ENCODE measurements at regions of chr6 and their contacts with region 1.

Region 1: GRCh38 chr6:20302702-20303251 is 90.5 kb upstream of the MBOAT1 start:
- DNase-seq: no peak
- ATAC-seq: no peak
- H3K4me3 ChIP-seq: no peak overlapping the region
- H3K4me3 Mint-ChIP-seq: no peak overlapping the region
- H3K27ac ChIP-seq: no peak overlapping the region
- H3K27ac Mint-ChIP-seq: no peak overlapping the region
- H3K4me1 ChIP-seq: no peaks in the 10 kb centered on the region
- H3K4me1 Mint-ChIP-seq: no peaks in the 10 kb centered on the region
- H3K27me3 ChIP-seq: no peaks in the 10 kb centered on the region
- H3K27me3 Mint-ChIP-seq: peaks cover 0 to 17% (median 0%) of the 10 kb centered on the region in 5 donors

Region 2: GRCh38 chr6:20279608-20280287 is 23.0 kb before region 1 on chr6:
- CTCF ChIA-PET with region 1: no interaction called
- POLR2A ChIA-PET with region 1: no interaction called
- intact Hi-C with region 1: loop called in 1 of 2 experiments (anchors 1 kb)
- DNase-seq: no peak
- ATAC-seq: no peak
- H3K4me3 ChIP-seq: no peak overlapping the region
- H3K4me3 Mint-ChIP-seq: no peak overlapping the region
- H3K27ac ChIP-seq: no peak overlapping the region
- H3K27ac Mint-ChIP-seq: no peak overlapping the region
- H3K4me1 ChIP-seq: no peaks in the 10 kb centered on the region
- H3K4me1 Mint-ChIP-seq: no peaks in the 10 kb centered on the region
- H3K27me3 ChIP-seq: peaks cover 0 to 6% of the 10 kb centered on the region in 2 donors
- H3K27me3 Mint-ChIP-seq: peaks cover 21 to 52% (median 30%) of the 10 kb centered on the region in 5 donors

Region 3: GRCh38 chr6:20444786-20445271 is 142.1 kb after region 1 on chr6:
- CTCF ChIA-PET with region 1: no interaction called
- POLR2A ChIA-PET with region 1: no interaction called
- intact Hi-C with region 1: no loop called
- DNase-seq: no peak
- ATAC-seq: peak; percentile 80
- H3K4me3 ChIP-seq: no peak overlapping the region
- H3K4me3 Mint-ChIP-seq: no peak overlapping the region
- H3K27ac ChIP-seq: no peak overlapping the region
- H3K27ac Mint-ChIP-seq: peak overlapping the region in 1 of 9 donors; percentile 6
- H3K4me1 ChIP-seq: peaks cover 0 to 11% of the 10 kb centered on the region in 2 donors
- H3K4me1 Mint-ChIP-seq: peaks cover 12 to 39% (median 20%) of the 10 kb centered on the region in 7 donors
- H3K27me3 ChIP-seq: no peaks in the 10 kb centered on the region
- H3K27me3 Mint-ChIP-seq: no peaks in the 10 kb centered on the region

Region 4: GRCh38 chr6:21538186-21538798 is 1235.5 kb after region 1 on chr6:
- CTCF ChIA-PET with region 1: no interaction called
- POLR2A ChIA-PET with region 1: no interaction called
- intact Hi-C with region 1: no loop called
- DNase-seq: no peak
- ATAC-seq: no peak
- H3K4me3 ChIP-seq: no peak overlapping the region
- H3K4me3 Mint-ChIP-seq: no peak overlapping the region
- H3K27ac ChIP-seq: no peak overlapping the region
- H3K27ac Mint-ChIP-seq: no peak overlapping the region
- H3K4me1 ChIP-seq: no peaks in the 10 kb centered on the region
- H3K4me1 Mint-ChIP-seq: no peaks in the 10 kb centered on the region
- H3K27me3 ChIP-seq: no peaks in the 10 kb centered on the region
- H3K27me3 Mint-ChIP-seq: peaks cover 0 to 23% (median 5%) of the 10 kb centered on the region in 5 donors